AG04449 (cell line): ENCODE measurements at regions of chr20 and their contacts with region 1.

Region 1: GRCh38 chr20:35478804-35479472 is 23.5 kb downstream of the CEP250 start:
- DNase-seq: no peak
- H3K4me3 ChIP-seq: no peak overlapping the region
- CTCF ChIP-seq: no peak

Region 2: GRCh38 chr20:35368666-35369423 is 110.1 kb before region 1 on chr20:
- CTCF ChIA-PET with region 1: no interaction called
- POLR2A ChIA-PET with region 1: no interaction called
- DNase-seq: no peak
- H3K4me3 ChIP-seq: no peak overlapping the region
- CTCF ChIP-seq: no peak

Region 3: GRCh38 chr20:35463455-35464300 is 15.3 kb before region 1 on chr20:
- CTCF ChIA-PET with region 1: interaction called, 32 read pairs
- POLR2A ChIA-PET with region 1: no interaction called
- DNase-seq: no peak
- H3K4me3 ChIP-seq: no peak overlapping the region
- CTCF ChIP-seq: peak; percentile 66